Activated CD8-positive, alpha-beta T cell treated with anti-CD3 and anti-CD28 coated beads, Interleukin-2, amount 10 ng/mL, durations not matched to agents 7 days and 5 days (primary cell): ENCODE measurements at regions of chr2 and their contacts with region 1.

Region 1: DNA sequence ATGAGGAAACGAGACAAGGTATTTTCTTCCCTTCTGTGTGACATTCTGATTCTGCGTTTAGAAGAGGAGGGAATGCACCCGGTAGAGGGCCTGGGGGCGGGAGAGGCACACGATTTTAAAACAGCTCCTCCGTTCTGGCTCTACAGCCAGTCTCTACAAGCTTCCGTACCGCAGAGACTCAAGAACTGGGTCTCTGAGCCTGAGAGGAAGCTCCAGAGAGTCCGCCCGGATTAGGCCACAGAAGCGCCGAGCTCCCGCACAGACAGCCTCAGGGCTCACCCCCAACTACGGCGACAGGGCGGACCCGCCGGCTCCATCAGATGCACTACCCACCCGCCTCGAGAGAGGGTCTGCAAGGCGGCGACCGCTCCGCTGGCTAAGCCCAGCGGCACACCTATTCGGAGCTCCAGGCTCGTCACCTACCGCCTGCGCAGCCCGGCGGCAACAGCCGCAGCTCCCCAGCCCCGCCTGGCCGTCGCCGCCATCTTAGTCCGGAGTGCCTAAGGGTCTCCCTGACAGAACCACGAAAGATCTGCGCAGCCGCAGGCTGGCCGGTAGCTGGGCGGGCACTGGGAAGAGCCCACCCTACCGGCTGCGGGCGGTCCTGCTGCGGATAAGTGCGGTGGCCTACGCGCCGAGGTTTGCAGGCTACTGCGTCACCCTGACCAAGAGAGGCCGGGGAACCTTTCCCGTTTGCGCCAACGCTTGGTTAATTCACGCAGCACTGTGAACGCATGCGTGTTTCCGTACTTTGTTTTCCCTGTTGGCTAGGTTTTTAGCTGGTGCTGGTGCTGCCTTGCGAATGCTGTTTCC is at the start of gene NFU1:
- DNase-seq: peak; percentile 91
- ATAC-seq: peak; percentile 92
- H3K4me3 Mint-ChIP-seq: peak within 1 kb of the TSS; percentile 96
- H3K27ac Mint-ChIP-seq: peak within 1 kb of the TSS; percentile 97
- H3K4me1 Mint-ChIP-seq: peaks cover 36% of the 10 kb centered on the region
- H3K27me3 Mint-ChIP-seq: no peaks in the 10 kb centered on the region
- total RNA-seq, gene NFU1: 27.8 to 30.4 TPM

Region 2: DNA sequence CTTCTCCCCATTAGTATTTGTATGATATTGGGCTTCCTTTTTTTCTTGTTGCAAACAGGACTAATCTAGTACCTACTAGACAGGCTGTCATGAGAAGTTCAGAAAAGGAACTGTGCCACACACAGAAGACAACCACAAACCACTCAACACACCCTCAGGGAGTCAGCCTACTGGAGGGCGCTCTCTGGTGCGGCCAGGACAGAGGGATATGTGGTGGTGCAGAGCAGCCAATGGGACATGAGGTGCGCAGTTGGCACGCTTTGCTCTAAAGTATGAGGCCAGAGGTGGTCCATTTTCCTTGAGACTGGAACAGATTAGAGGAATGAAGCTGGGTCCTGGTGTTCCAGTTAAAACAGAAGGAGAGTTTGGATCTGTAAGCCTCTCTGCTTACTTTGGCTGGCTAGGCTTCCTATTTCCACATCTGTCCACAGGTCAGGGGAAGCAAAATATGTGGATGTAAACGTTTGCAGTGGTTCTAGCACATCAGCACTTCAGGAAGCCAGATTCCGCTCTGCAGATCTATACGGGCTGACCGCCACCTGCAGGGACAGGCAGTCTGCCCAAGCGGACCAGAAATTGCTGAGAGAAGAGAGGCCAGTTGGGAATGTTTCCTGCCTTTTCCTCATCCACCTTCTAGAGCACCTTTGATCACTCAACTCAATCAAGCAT is 164.2 kb before region 1 on chr2:
- CTCF ChIA-PET with region 1: no interaction called
- POLR2A ChIA-PET with region 1: no interaction called
- DNase-seq: no peak
- ATAC-seq: no peak
- H3K4me3 Mint-ChIP-seq: no peak overlapping the region
- H3K27ac Mint-ChIP-seq: no peak overlapping the region
- H3K4me1 Mint-ChIP-seq: no peaks in the 10 kb centered on the region
- H3K27me3 Mint-ChIP-seq: peaks cover 39% of the 10 kb centered on the region

Region 3: GRCh38 chr2:69375494-69376353 is 61.4 kb before region 1 on chr2:
- CTCF ChIA-PET with region 1: interaction called, 21 read pairs
- POLR2A ChIA-PET with region 1: interaction called, 5 read pairs
- DNase-seq: peak; percentile 47
- ATAC-seq: peak; percentile 79
- H3K4me3 Mint-ChIP-seq: no peak overlapping the region
- H3K27ac Mint-ChIP-seq: no peak overlapping the region
- H3K4me1 Mint-ChIP-seq: peaks cover 14% of the 10 kb centered on the region
- H3K27me3 Mint-ChIP-seq: no peaks in the 10 kb centered on the region

Region 4: GRCh38 chr2:69386789-69387734 is 50.1 kb before region 1 on chr2 and contains the start of gene GFPT1:
- CTCF ChIA-PET with region 1: interaction called, 8 read pairs
- POLR2A ChIA-PET with region 1: interaction called, 11 read pairs
- DNase-seq: peak; percentile 94
- ATAC-seq: peak; percentile 96
- H3K4me3 Mint-ChIP-seq: peak within 1 kb of the TSS; percentile 87
- H3K27ac Mint-ChIP-seq: peak within 1 kb of the TSS; percentile 89
- H3K4me1 Mint-ChIP-seq: peaks cover 38% of the 10 kb centered on the region
- H3K27me3 Mint-ChIP-seq: peaks cover 2% of the 10 kb centered on the region
- total RNA-seq, gene GFPT1: 23.5 to 26.1 TPM

Region 5: GRCh38 chr2:69499966-69500365 is 62.8 kb after region 1 on chr2:
- CTCF ChIA-PET with region 1: interaction called, 11 read pairs
- POLR2A ChIA-PET with region 1: interaction called, 5 read pairs
- DNase-seq: no peak
- ATAC-seq: no peak
- H3K4me3 Mint-ChIP-seq: no peak overlapping the region
- H3K27ac Mint-ChIP-seq: peak overlapping the region; percentile 70
- H3K4me1 Mint-ChIP-seq: peaks cover 12% of the 10 kb centered on the region
- H3K27me3 Mint-ChIP-seq: no peaks in the 10 kb centered on the region